ENCODE measurements at regions of chr9 and their contacts with region 1.

Region 1: GRCh38 chr9:34899535-34900158 is 58.4 kb upstream of the PHF24 start:
- DNase-seq: peak; percentile 71
- H3K4me3 Mint-ChIP-seq: no peak overlapping the region
- H3K27ac Mint-ChIP-seq: no peak overlapping the region
- H3K4me1 Mint-ChIP-seq: no peaks in the 10 kb centered on the region
- H3K27me3 Mint-ChIP-seq: peaks cover 24% of the 10 kb centered on the region

Region 2: GRCh38 chr9:34252670-34253459 is 646.8 kb before region 1 on chr9:
- intact Hi-C with region 1: no loop called
- DNase-seq: peak; percentile 50
- H3K4me3 Mint-ChIP-seq: no peak overlapping the region
- H3K27ac Mint-ChIP-seq: no peak overlapping the region
- H3K4me1 Mint-ChIP-seq: peaks cover 15% of the 10 kb centered on the region
- H3K27me3 Mint-ChIP-seq: no peaks in the 10 kb centered on the region

Region 3: DNA sequence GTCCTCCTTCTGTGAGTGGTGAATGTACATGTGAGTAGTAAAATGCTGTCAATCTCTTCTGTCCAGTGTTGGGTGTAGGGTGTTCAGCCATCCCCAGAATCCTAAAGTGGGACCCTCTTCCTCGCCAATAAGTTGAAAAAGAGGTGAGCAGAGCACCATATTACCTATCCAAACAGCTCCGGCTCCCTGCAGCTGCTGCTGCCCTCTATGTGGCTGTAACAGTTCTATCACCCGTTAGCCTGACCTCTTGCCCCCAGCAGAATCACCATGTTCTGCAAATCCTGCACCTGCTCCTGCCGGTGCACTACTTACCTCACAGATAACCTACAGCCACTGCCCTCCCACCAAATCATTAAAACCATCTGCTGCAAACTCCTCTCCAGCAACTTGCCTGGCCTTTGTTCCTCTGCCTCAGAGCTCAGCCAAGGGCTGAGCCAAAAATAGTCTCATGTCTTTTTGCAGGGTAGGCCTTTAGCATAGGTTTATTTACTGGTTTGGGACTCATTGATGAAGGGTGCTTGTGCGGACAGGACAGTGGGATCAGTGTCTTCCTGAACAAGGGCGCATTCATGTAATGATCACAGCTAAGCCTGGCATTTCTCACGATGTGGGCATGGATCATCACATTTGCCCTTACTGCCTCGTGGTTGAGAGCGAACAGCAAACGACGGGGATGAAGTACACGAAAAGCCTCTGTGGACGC is 140.1 kb before region 1 on chr9:
- intact Hi-C with region 1: loop called (anchors 1 kb)
- DNase-seq: no peak
- H3K4me3 Mint-ChIP-seq: no peak overlapping the region
- H3K27ac Mint-ChIP-seq: no peak overlapping the region
- H3K4me1 Mint-ChIP-seq: no peaks in the 10 kb centered on the region
- H3K27me3 Mint-ChIP-seq: peaks cover 33% of the 10 kb centered on the region

Region 4: GRCh38 chr9:34961574-34962490 is 62.2 kb after region 1 on chr9:
- intact Hi-C with region 1: loop called (anchors 2 kb)
- DNase-seq: no peak
- H3K4me3 Mint-ChIP-seq: peak overlapping the region; percentile 24
- H3K27ac Mint-ChIP-seq: peak overlapping the region; percentile 30
- H3K4me1 Mint-ChIP-seq: peaks cover 36% of the 10 kb centered on the region
- H3K27me3 Mint-ChIP-seq: peaks cover 45% of the 10 kb centered on the region

Region 5: GRCh38 chr9:35096035-35096849 is 196.6 kb after region 1 on chr9 and contains the start of gene PIGO:
- intact Hi-C with region 1: loop called (anchors 1 kb)
- DNase-seq: peak; percentile 85
- H3K4me3 Mint-ChIP-seq: peak within 1 kb of the TSS; percentile 85
- H3K27ac Mint-ChIP-seq: peak within 1 kb of the TSS; percentile 90
- H3K4me1 Mint-ChIP-seq: peaks cover 33% of the 10 kb centered on the region
- H3K27me3 Mint-ChIP-seq: no peaks in the 10 kb centered on the region
- total RNA-seq, gene PIGO: 34.4 and 39.7 TPM in 2 replicates

Region 6: GRCh38 chr9:35481347-35481975 is 581.8 kb after region 1 on chr9:
- intact Hi-C with region 1: loop called (anchors 1 kb)
- DNase-seq: peak; percentile 12
- H3K4me3 Mint-ChIP-seq: no peak overlapping the region
- H3K27ac Mint-ChIP-seq: no peak overlapping the region
- H3K4me1 Mint-ChIP-seq: no peaks in the 10 kb centered on the region
- H3K27me3 Mint-ChIP-seq: peaks cover 7% of the 10 kb centered on the region

Measured in activated T-helper 1 cell treated with anti-CD3 and anti-CD28 coated beads, Interleukin-12 subunit alpha, Interleukin-12 subunit beta, Interleukin-2, Interleukin-4 antibody, amounts not matched to agents 30 ng/mL and 10 ng/mL and 1 ng/mL, durations not matched to agents 14 hours and 24 hours and 36 hours (primary cell).